A673 (cell line): ENCODE measurements at regions of chr3 and their contacts with region 1.

Region 1: DNA sequence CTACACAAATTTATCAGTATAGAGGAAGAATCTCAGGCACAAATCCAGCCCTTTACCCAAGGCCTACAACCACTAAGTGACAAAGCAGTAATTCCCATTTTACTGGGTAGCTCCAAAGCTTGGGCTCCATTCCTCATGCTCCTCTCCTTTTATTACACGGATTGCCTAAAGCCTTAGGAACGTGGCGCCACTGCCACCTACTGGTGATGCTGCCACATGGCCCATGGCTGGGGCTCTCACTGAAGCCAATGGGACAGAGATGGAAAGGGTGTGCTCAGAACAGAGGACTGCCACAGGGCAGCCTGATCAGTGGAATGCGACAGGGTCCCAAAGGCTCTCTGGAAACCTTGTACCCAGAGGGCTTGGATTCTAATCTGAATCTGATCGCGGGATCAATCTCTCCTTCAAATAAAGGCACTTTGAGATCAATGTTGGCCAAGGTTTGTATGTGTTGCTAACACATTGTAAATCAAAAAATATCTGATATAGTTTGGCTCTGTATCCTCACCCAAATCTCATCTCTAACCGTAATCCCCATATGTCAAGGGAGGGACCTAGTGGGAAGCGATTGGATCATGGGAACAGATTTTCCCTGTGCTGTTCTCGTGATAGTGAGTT is 33.5 kb upstream of the LYZL4 start:
- DNase-seq: peak; percentile 71
- H3K4me3 ChIP-seq: no peak overlapping the region
- H3K27ac ChIP-seq: no peak overlapping the region
- H3K4me1 ChIP-seq: no peaks in the 10 kb centered on the region
- H3K27me3 ChIP-seq: no peaks in the 10 kb centered on the region
- CTCF ChIP-seq: peak; percentile 83

Region 2: GRCh38 chr3:42118762-42119361 is 325.1 kb before region 1 on chr3:
- CTCF ChIA-PET with region 1: no interaction called
- POLR2A ChIA-PET with region 1: no interaction called
- intact Hi-C with region 1: loop called (anchors 10 kb)
- DNase-seq: peak; percentile 43
- H3K4me3 ChIP-seq: no peak overlapping the region
- H3K27ac ChIP-seq: no peak overlapping the region
- H3K4me1 ChIP-seq: peaks cover 15% of the 10 kb centered on the region
- H3K27me3 ChIP-seq: no peaks in the 10 kb centered on the region
- CTCF ChIP-seq: peak; percentile 41; the same call in 1 of the 2 replicates

Region 3: DNA sequence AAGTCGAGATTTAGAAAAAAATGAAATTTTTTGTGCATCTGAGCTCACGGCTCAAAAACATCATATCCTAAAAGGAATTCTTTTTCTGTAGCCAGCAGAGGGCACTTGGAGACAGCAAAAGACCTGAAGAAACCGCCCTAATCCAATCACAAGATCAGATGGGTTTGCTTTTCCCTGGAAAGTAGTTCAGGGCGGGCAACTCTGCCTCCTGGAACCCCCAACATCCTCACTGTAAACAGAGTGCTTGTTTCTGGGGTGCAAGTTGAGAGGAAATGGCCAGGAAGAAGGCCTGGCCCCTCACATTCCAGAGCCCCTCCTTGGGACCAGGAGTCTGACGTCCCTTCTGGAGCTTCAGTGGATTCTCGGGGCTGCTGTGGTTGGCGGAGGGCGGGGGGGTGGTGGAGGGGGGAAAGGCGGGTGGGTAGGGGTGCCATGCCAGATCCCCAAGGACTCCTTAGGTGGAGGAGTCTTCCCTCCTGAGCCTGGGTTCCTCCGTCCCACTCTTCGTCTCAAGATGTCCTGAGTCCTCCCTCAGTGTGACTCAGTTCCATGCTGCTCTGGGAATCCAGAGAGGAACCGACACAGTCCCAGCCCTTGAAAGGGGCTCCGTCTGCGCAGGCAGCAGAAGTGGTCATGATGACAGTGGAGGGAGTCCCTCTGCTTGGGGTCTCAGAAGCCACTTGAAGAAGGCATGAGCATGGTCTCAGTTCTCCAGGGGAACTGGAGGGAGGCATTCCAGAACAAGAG is 213.8 kb before region 1 on chr3:
- CTCF ChIA-PET with region 1: interaction called, 10 read pairs
- POLR2A ChIA-PET with region 1: no interaction called
- intact Hi-C with region 1: loop called (anchors 1 kb)
- DNase-seq: peak; percentile 52
- H3K4me3 ChIP-seq: no peak overlapping the region
- H3K27ac ChIP-seq: no peak overlapping the region
- H3K4me1 ChIP-seq: no peaks in the 10 kb centered on the region
- H3K27me3 ChIP-seq: no peaks in the 10 kb centered on the region
- CTCF ChIP-seq: peak; percentile 47

Region 4: DNA sequence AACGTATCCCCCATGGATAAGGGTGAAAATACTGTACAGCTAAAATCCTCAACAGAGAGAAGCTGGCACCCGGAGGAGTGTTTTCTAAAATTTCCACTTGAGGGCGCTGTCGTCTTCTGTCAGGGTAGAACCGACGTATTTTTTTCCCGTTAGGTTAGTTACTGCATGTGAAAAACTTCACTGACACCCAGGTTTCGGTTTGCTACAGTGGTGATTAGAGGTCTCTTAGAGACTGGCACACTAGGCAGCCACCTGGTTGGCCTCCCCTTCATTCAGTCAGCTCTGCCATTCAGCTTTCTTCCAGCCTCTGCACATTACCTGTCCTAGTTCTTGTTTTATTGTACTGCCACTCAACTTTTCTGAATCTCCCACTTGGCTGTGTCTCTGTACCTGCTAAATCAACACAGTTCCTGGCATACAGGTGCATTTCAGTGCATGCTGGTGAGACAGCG is 196.3 kb before region 1 on chr3:
- CTCF ChIA-PET with region 1: interaction called, 9 read pairs
- POLR2A ChIA-PET with region 1: no interaction called
- intact Hi-C with region 1: loop called (anchors 1 kb)
- DNase-seq: peak; percentile 62
- H3K4me3 ChIP-seq: no peak overlapping the region
- H3K27ac ChIP-seq: no peak overlapping the region
- H3K4me1 ChIP-seq: no peaks in the 10 kb centered on the region
- H3K27me3 ChIP-seq: no peaks in the 10 kb centered on the region
- CTCF ChIP-seq: peak; percentile 63

Region 5: GRCh38 chr3:42539869-42540714 is 96.2 kb after region 1 on chr3:
- CTCF ChIA-PET with region 1: no interaction called
- POLR2A ChIA-PET with region 1: no interaction called
- intact Hi-C with region 1: loop called (anchors 10 kb)
- DNase-seq: peak; percentile 1
- H3K4me3 ChIP-seq: no peak overlapping the region
- H3K27ac ChIP-seq: no peak overlapping the region
- H3K4me1 ChIP-seq: no peaks in the 10 kb centered on the region
- H3K27me3 ChIP-seq: no peaks in the 10 kb centered on the region
- CTCF ChIP-seq: peak; percentile 65

Region 6: DNA sequence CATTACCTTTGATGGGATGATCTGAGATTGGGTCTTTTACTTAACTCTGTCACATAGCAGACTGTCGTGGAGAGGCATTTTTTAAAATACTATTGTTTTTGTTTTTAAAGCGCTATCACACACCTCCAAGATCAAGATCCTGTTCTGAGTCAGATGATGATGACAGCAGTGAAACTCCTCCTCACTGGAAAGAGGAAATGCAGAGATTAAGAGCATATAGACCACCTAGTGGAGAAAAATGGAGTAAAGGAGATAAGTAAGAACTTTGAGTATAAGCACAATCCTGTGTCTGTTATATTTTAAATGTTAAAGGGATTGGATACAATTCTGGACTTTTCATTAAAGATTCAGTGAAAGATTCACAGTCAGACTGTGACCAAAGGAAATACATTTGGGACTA is 191.2 kb after region 1 on chr3:
- CTCF ChIA-PET with region 1: no interaction called
- POLR2A ChIA-PET with region 1: no interaction called
- intact Hi-C with region 1: no loop called
- DNase-seq: no peak
- H3K4me3 ChIP-seq: no peak overlapping the region
- H3K27ac ChIP-seq: no peak overlapping the region
- H3K4me1 ChIP-seq: no peaks in the 10 kb centered on the region
- H3K27me3 ChIP-seq: no peaks in the 10 kb centered on the region
- CTCF ChIP-seq: no peak; the same call in 1 of the 2 replicates

Region 7: DNA sequence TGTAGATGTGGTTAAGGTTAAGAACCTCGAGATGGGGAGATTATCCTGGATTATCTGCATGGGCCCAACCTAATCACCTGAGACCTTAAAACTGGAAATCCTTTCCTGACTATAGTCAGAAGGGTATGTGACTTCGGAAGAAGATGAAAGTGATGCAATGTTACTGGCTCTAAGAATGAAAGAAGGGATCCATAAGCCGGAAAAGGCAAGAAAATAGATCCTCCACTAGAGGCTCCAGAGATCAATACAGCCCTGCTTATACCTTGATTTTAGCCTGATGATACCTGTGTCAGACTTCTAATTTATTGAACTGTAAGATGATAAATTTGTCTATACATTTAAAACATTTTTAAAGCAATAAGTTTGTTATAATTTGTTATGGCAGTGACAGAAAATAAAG is 513.6 kb after region 1 on chr3:
- CTCF ChIA-PET with region 1: no interaction called
- POLR2A ChIA-PET with region 1: no interaction called
- intact Hi-C with region 1: no loop called
- DNase-seq: no peak
- H3K4me3 ChIP-seq: no peak overlapping the region
- H3K27ac ChIP-seq: no peak overlapping the region
- H3K4me1 ChIP-seq: no peaks in the 10 kb centered on the region
- H3K27me3 ChIP-seq: no peaks in the 10 kb centered on the region
- CTCF ChIP-seq: no peak